Prostate gland (tissue), 2 donors: ENCODE measurements at regions of chr2 and their contacts with region 1.

Region 1: DNA sequence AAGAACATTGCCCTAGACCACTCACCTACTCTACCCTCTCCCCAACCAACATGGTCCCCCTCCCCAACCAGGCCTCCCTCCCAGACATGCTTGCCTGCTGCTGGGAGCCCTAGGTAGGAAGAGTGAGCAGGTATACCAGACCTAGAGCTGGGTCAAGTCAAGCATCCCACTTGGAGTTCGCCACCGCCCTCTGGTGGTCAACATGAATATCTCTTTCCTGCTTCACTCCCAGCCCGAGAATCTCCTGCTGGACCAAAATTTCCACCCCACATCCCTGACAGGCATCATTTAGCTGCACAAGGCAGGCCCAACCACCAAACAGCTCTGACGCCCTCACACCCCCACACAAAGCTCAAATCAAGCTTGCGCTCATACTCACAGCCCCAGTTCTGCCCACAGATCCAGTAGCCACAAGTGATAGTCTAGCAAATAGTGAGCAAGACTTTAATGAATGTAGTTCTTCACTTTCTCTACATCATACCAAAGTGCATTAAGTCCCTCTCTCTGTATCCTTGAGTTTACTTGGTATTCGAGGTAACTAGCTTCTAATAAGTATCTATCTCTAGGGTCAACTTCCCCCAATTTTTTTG is 116.0 kb downstream of the TNS1 start:
- DNase-seq: peak; percentile 76
- H3K4me3 ChIP-seq: no peak overlapping the region
- H3K27ac ChIP-seq: peak overlapping the region in 1 of 2 donors; percentile 27
- H3K4me1 ChIP-seq: no peaks in the 10 kb centered on the region
- H3K27me3 ChIP-seq: no peaks in the 10 kb centered on the region
- CTCF ChIP-seq: peak; percentile 61 to 85 (median 84)
- POLR2A ChIP-seq: no peak

Region 2: GRCh38 chr2:217785544-217786045 is 101.2 kb before region 1 on chr2:
- intact Hi-C with region 1: loop called (anchors 5 kb)
- DNase-seq: peak; percentile 76
- H3K4me3 ChIP-seq: no peak overlapping the region
- H3K27ac ChIP-seq: no peak overlapping the region
- H3K4me1 ChIP-seq: no peaks in the 10 kb centered on the region
- H3K27me3 ChIP-seq: no peaks in the 10 kb centered on the region
- CTCF ChIP-seq: peak; percentile 91 to 95 (median 94)
- POLR2A ChIP-seq: no peak

Region 3: GRCh38 chr2:217964275-217965161 is 77.7 kb after region 1 on chr2:
- intact Hi-C with region 1: no loop called
- DNase-seq: no peak
- H3K4me3 ChIP-seq: no peak overlapping the region
- H3K27ac ChIP-seq: peak overlapping the region; percentile 54 to 62
- H3K4me1 ChIP-seq: peaks cover 8% of the 10 kb centered on the region
- H3K27me3 ChIP-seq: no peaks in the 10 kb centered on the region
- CTCF ChIP-seq: no peak
- POLR2A ChIP-seq: no peak

Region 4: DNA sequence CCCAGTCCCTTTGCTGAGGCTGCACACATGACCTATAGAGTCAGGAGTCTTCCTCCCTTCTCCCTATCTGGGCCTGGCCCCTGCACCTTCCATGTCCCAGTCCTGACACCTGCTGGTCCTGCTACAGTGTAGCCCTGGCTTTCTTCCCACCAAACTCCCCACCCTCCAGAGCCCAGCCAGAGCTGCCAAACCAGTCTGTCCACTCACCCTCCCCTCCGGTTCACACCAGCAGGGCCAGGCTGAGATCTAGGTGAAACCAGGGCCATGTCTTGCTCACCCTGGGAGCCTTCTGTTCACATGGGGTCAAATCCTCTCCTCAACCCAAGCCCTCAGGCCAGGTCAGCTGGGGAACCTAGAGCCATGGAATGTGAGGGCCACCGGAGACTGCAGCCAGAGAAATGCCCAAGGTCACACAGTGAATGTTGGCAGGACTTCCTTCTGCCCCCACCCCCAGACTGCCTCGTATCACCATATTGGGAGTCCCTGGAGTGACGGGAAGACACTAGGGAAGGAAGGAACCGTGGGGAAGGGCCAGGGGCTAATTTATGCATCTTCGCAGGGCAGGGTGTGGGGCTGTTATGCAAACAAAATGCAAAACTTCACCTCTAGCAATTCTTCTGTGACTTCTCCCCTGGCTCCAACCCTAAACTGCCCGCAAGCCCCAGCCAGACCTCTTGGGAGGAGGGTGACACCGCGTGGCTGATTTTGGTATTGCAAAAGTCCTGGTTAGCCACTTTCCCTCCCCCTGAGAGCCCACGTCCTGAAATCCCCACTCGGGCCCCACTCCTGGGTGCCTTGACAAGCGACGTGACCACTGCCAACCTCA is 101.4 kb after region 1 on chr2:
- intact Hi-C with region 1: loop called (anchors 5 kb)
- DNase-seq: peak; percentile 96
- H3K4me3 ChIP-seq: no peak overlapping the region
- H3K27ac ChIP-seq: peak overlapping the region; percentile 80 to 83
- H3K4me1 ChIP-seq: peaks cover 7% of the 10 kb centered on the region
- H3K27me3 ChIP-seq: no peaks in the 10 kb centered on the region
- CTCF ChIP-seq: peak; percentile 80 to 94 (median 90)
- POLR2A ChIP-seq: no peak